ENCODE measurements at regions of chr7 and their contacts with region 1.

Region 1: GRCh38 chr7:90455163-90456030 is 14.0 kb upstream of the PTTG1IP2 start:
- DNase-seq: peak in 1 of 2 donors; percentile 11
- ATAC-seq: peak in 6 of 8 donors; percentile 61 to 71 (median 68)
- H3K4me3 ChIP-seq: peak overlapping the region in 8 of 10 donors; percentile 7 to 31 (median 20)
- H3K27ac ChIP-seq: no peak overlapping the region
- H3K4me1 ChIP-seq: peaks cover 0 to 11% (median 6%) of the 10 kb centered on the region in 9 donors
- H3K27me3 ChIP-seq: no peaks in the 10 kb centered on the region
- CTCF ChIP-seq: peak; percentile 21 to 81 (median 71)

Region 2: DNA sequence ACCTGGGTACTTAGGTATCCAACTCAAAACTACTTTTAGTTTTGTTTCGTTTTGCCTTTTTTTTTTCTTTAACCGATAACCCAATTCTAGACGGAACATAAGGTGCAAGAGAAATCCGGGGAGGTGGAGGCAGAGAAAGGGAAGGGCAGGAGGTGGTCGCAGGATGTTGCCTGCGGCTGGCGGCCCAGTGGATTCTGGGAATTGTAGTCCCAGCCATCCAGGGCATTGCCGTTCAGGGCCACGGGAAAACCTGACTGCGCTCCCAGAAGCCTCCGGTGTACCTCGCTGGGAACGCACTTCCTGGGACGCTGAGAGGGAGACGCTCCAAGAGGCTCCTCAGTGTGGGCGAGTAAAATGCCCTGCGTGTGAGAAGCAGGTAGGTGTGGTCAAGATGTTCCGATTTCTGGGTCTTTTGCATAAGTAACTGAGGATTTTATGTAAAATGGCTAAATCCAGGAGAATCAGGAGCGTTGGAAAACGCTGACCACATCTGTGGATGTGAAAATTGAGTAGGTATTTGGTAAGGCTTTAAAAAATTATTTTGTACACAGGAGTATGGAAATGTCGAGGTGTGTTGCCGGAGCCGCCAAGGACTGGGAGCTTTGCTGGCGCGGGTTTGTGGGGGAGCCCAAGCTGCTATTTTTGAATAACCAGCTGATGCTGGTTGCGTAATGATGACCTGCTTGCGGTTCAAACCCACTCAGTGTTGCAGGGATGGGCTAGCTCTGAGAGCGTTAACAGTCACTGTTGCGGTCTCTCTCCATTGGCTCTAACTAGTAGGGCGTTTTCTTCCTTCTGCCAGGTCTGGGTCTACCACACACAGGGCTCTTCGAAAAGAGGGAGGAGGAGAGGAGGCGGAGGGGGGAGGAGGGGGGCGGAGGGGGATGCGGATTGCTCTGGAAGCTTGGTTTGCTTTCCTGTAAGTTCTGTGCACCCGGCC is 52.0 kb before region 1 on chr7 and contains the start of gene CLDN12:
- intact Hi-C with region 1: no loop called
- DNase-seq: peak; percentile 81 to 89
- ATAC-seq: peak; percentile 94 to 98 (median 96)
- H3K4me3 ChIP-seq: peak within 1 kb of the TSS; percentile 50 to 85 (median 64)
- H3K27ac ChIP-seq: peak within 1 kb of the TSS; percentile 64 to 92 (median 88)
- H3K4me1 ChIP-seq: peaks cover 0 to 44% (median 26%) of the 10 kb centered on the region in 9 donors
- H3K27me3 ChIP-seq: no peaks in the 10 kb centered on the region
- CTCF ChIP-seq: no peak
- total RNA-seq, gene CLDN12: 25.3 to 47.6 (median 38.2) TPM

Region 3: GRCh38 chr7:90595801-90596671 is 140.6 kb after region 1 on chr7 and contains the start of gene CDK14:
- intact Hi-C with region 1: loop called in 1 of 10 experiments (anchors 10 kb)
- DNase-seq: peak; percentile 81 to 85
- ATAC-seq: peak; percentile 62 to 84 (median 74)
- H3K4me3 ChIP-seq: peak within 1 kb of the TSS; percentile 63 to 90 (median 78)
- H3K27ac ChIP-seq: peak within 1 kb of the TSS; percentile 80 to 91 (median 84)
- H3K4me1 ChIP-seq: peaks cover 0 to 58% (median 25%) of the 10 kb centered on the region in 9 donors
- H3K27me3 ChIP-seq: peaks cover 0 to 5% (median 0%) of the 10 kb centered on the region in 7 donors
- CTCF ChIP-seq: peak; percentile 26 to 67 (median 50)
- total RNA-seq, gene CDK14: 12.7 to 36.5 (median 25.5) TPM

Region 4: DNA sequence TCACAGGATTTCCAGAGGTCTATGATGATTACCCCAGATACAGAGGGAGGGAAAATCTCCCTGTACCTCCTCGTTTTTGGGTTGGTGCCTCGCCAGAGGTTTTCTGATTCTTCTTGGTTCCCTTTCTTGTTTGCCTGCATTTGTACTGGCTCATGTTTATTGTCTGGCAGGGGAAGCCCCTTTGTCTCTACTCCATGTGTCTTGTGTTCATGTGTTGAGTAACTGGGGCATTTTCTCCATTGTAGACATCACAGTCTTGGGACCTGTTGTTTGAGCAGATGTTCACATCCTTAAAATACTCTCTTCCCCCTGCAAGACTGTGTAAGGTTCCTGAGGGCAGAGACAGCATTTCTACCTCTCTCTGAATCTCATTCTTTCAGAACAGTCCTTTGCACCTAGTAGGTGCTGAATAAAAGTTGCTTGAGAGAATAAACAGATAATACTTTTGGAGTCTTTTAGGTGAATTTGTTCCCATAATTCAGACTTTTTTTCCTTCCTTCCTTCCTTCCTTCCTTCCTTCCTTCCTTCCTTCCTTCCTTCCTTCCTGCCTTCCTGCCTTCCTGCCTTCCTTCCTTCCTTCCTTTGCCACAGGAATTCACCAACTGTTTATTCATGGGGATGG is 165.8 kb after region 1 on chr7:
- intact Hi-C with region 1: loop called in 7 of 10 experiments (anchors 5 to 10 kb)
- DNase-seq: no peak
- ATAC-seq: peak in 1 of 8 donors; percentile 7
- H3K4me3 ChIP-seq: no peak overlapping the region
- H3K27ac ChIP-seq: no peak overlapping the region
- H3K4me1 ChIP-seq: peaks cover 4 to 59% (median 36%) of the 10 kb centered on the region in 9 donors
- H3K27me3 ChIP-seq: no peaks in the 10 kb centered on the region
- CTCF ChIP-seq: no peak

Region 5: DNA sequence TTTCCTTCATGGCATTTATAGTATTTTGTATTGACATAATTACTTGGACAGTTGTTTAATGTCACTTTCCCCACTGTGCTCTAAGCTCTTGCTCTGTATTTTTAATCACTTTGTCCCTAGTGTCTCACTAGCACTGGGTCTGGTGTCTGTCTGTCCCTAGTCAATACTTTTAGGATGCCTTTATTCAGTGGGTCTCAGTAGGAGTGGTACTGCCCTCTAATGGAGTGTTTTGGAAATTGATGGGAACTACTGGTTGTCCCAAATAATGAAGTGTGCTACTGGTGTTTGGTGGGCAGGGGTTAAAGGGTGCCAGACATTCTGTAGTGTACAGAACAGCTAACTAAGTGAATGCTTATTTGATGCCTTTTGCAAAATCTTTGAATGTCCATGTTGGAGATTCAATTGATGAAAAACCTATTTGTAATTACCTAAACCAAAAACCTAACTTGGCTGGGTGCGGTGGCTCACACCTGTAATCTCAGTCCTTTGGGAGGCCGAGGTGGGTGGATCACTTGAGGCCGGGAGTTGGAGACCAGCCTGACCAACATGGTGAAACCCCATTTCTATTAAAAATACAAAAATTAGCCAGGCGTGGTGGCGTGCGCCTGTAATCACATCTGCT is 174.0 kb after region 1 on chr7:
- intact Hi-C with region 1: loop called in 9 of 10 experiments (anchors 2 to 10 kb)
- DNase-seq: peak in 1 of 2 donors; percentile 38
- ATAC-seq: peak; percentile 70 to 88 (median 83)
- H3K4me3 ChIP-seq: no peak overlapping the region
- H3K27ac ChIP-seq: no peak overlapping the region
- H3K4me1 ChIP-seq: peaks cover 4 to 24% (median 20%) of the 10 kb centered on the region in 9 donors
- H3K27me3 ChIP-seq: no peaks in the 10 kb centered on the region
- CTCF ChIP-seq: peak; percentile 46 to 78 (median 69)